Spleen (tissue), 13 donors: ENCODE measurements at regions of chr11 and their contacts with region 1.

Region 1: GRCh38 chr11:47858169-47858543 is 10.0 kb upstream of the NUP160 start:
- DNase-seq: no peak
- H3K4me3 ChIP-seq: no peak overlapping the region
- H3K27ac ChIP-seq: peak overlapping the region in 7 of 8 donors; percentile 18 to 78 (median 53)
- H3K4me1 ChIP-seq: peaks cover 36 to 99% (median 73%) of the 10 kb centered on the region in 6 donors
- H3K27me3 ChIP-seq: no peaks in the 10 kb centered on the region
- CTCF ChIP-seq: no peak
- POLR2A ChIP-seq: no peak

Region 2: DNA sequence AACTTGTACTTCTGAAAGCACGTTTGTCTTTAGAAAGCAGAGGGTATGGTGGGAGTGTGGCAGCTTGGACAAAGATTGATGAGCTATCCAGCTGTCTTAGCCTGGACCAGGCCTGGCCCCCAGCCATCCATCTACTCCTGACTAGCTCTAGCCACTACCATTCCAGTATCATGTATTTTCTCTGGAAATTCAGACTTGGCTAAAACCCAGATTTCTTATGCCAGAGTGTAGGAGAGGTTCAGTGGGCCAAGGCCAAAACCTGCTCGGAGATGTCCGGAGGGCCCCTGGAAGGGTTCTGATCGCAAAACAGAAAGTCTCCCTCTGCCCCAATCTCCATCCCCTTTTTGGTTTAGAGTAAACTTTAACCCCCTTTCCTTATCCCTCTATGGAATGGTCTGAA is 191.0 kb before region 1 on chr11:
- intact Hi-C with region 1: no loop called
- DNase-seq: no peak
- H3K4me3 ChIP-seq: no peak overlapping the region
- H3K27ac ChIP-seq: no peak overlapping the region
- H3K4me1 ChIP-seq: no peaks in the 10 kb centered on the region
- H3K27me3 ChIP-seq: no peaks in the 10 kb centered on the region
- CTCF ChIP-seq: no peak
- POLR2A ChIP-seq: no peak

Region 3: GRCh38 chr11:47917643-47918369 is 59.6 kb after region 1 on chr11:
- intact Hi-C with region 1: loop called (anchors 10 kb)
- DNase-seq: peak; percentile 86
- H3K4me3 ChIP-seq: peak overlapping the region in 4 of 8 donors; percentile 9 to 46 (median 12)
- H3K27ac ChIP-seq: peak overlapping the region; percentile 49 to 84 (median 81)
- H3K4me1 ChIP-seq: peaks cover 44 to 100% (median 80%) of the 10 kb centered on the region in 6 donors
- H3K27me3 ChIP-seq: no peaks in the 10 kb centered on the region
- CTCF ChIP-seq: no peak
- POLR2A ChIP-seq: no peak